ENCODE measurements at regions of chr13 and their contacts with region 1.

Region 1: DNA sequence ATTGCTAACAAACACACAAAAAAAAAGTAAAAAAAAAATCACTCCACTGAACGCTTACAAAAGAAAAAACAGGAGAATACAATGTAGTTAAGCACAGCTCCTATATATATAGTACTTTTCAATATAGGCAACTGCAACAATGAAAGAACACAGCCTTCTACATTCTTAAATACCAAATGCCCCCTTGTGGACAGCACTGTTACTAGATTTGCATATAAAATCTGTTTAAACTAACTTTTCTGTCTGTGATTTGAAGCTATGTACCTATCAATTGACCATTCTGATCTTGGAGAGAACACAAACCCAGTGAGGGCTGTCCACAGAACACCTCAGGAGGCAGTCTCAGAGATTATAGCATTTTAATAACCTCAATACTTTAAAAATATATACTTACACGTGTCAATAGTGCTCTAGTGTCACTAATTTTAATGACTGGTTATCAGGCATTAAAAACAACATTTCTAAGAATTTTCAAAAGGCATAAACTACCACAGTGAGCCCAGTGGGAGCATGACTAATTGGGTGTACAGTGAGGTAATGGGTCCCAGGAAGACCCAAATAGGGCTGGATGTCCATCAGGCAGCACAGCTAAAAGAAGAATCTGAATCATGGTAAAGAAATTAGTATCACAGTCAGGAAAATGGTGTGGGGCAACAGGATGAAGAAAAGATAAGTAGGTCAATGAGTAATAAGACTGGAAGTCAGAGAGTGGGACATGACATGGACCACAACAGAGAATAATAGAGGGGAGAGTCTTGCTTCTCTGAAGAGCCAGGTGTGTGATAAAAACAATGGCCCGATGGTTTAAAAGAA is 22.2 kb downstream of the CCDC169 start:
- DNase-seq: peak; percentile 71
- H3K4me3 ChIP-seq: no peak overlapping the region
- H3K27ac ChIP-seq: no peak overlapping the region
- H3K4me1 ChIP-seq: no peaks in the 10 kb centered on the region
- H3K27me3 ChIP-seq: no peaks in the 10 kb centered on the region
- CTCF ChIP-seq: peak; percentile 54 to 66 (median 60)
- POLR2A ChIP-seq: no peak

Region 2: GRCh38 chr13:35978603-35979316 is 296.6 kb before region 1 on chr13:
- intact Hi-C with region 1: loop called (anchors 5 kb)
- DNase-seq: peak; percentile 66
- H3K4me3 ChIP-seq: no peak overlapping the region
- H3K27ac ChIP-seq: peak overlapping the region in 1 of 2 donors; percentile 74
- H3K4me1 ChIP-seq: peaks cover 5% of the 10 kb centered on the region
- H3K27me3 ChIP-seq: no peaks in the 10 kb centered on the region
- CTCF ChIP-seq: peak; percentile 87 to 93 (median 92)
- POLR2A ChIP-seq: no peak

Region 3: DNA sequence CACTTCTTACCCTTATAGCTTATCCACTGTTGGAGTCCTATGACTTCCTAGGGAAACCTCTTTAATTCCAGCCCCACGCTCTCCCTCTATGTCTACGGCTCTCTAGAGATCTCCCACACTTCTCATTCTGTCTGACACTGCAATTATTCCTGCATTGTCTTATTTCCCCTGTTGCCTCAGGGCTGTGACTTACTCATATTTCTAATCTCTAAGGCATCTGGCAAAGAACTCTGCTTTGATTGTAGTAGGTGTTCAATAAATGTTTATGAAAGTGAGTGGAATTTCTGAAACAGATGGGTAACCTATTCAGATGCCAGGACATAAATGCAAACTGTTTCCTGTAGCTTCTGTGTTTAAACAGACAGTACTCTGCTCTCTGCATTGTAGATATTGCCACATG is 296.0 kb after region 1 on chr13:
- intact Hi-C with region 1: no loop called
- DNase-seq: no peak
- H3K4me3 ChIP-seq: no peak overlapping the region
- H3K27ac ChIP-seq: no peak overlapping the region
- H3K4me1 ChIP-seq: no peaks in the 10 kb centered on the region
- H3K27me3 ChIP-seq: no peaks in the 10 kb centered on the region
- CTCF ChIP-seq: no peak
- POLR2A ChIP-seq: no peak